CD14-positive monocyte (primary cell): ENCODE measurements at regions of chr19 and their contacts with region 1.

Region 1: DNA sequence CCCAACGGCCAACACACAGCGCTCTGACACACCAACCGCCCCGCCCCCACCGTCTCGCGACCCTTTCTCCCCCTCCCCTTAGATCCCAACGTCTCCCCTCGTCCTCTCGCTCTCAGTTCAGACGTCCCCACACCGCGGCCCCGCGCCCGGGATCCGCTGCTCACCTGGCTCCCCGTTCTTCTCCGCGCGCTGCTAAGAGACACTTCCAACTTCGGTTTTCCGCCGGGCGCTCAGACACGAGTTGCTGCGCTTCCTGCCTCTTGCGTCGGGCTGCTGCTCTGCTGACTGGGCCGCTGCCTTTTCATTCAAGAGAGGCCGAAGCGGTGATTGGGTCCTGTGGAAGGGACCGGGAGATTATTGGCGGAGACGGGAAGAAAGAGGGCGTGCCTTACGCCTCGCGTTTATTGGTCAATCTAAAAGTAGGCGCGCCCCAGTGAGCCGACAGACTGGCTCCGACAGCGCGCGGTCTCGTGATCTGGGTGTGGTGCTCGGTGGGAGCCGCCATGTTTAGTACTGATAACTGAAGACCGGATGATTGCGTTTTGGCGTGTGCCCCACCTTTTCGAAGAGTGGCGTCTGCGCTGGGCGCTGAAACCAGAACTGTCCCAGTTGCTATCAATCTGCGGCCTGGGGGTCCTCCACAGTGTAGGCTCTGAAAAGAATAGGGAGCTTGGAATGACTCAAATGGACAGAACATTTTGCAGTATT is at the start of gene DDX39A:
- DNase-seq: peak; percentile 99 to 100 (median 99)
- H3K4me3 ChIP-seq: peak within 1 kb of the TSS; percentile 70 to 95 (median 93)
- H3K4me3 Mint-ChIP-seq: peak within 1 kb of the TSS; percentile 93 to 95
- H3K27ac ChIP-seq: peak within 1 kb of the TSS; percentile 93
- H3K27ac Mint-ChIP-seq: peak within 1 kb of the TSS; percentile 97 to 99 (median 98)
- H3K4me1 ChIP-seq: peaks cover 57 to 67% of the 10 kb centered on the region in 2 donors
- H3K4me1 Mint-ChIP-seq: peaks cover 62% of the 10 kb centered on the region
- H3K27me3 ChIP-seq: no peaks in the 10 kb centered on the region
- H3K27me3 Mint-ChIP-seq: peaks cover 0 to 20% (median 0%) of the 10 kb centered on the region in 3 donors
- CTCF ChIP-seq: no peak
- polyA plus RNA-seq, gene DDX39A: 78.7 to 187 (median 83.5) TPM

Region 2: GRCh38 chr19:14432791-14433553 is 13.7 kb after region 1 on chr19 and contains the start of gene PKN1:
- intact Hi-C with region 1: loop called in 1 of 2 experiments (anchors 2 kb)
- DNase-seq: no peak
- H3K4me3 ChIP-seq: peak within 1 kb of the TSS; percentile 57 to 93 (median 89)
- H3K4me3 Mint-ChIP-seq: peak within 1 kb of the TSS; percentile 79 to 87
- H3K27ac ChIP-seq: peak within 1 kb of the TSS in 1 of 2 donors; percentile 62
- H3K27ac Mint-ChIP-seq: peak within 1 kb of the TSS; percentile 42 to 86 (median 79)
- H3K4me1 ChIP-seq: peaks cover 40 to 48% of the 10 kb centered on the region in 2 donors
- H3K4me1 Mint-ChIP-seq: peaks cover 38% of the 10 kb centered on the region
- H3K27me3 ChIP-seq: peaks cover 0 to 2% of the 10 kb centered on the region in 2 donors
- H3K27me3 Mint-ChIP-seq: peaks cover 8 to 16% (median 9%) of the 10 kb centered on the region in 3 donors
- CTCF ChIP-seq: no peak
- polyA plus RNA-seq, gene PKN1: 49.5 to 119 (median 49.6) TPM